ENCODE measurements at regions of chr16 and their contacts with region 1.

Region 1: GRCh38 chr16:29029168-29029994 is 44.5 kb downstream of the LAT start:
- DNase-seq: peak; percentile 96
- ATAC-seq: peak; percentile 96
- H3K4me3 Mint-ChIP-seq: peak overlapping the region; percentile 0
- H3K27ac Mint-ChIP-seq: peak overlapping the region; percentile 84
- H3K4me1 Mint-ChIP-seq: peaks cover 46% of the 10 kb centered on the region
- H3K27me3 Mint-ChIP-seq: no peaks in the 10 kb centered on the region

Region 2: DNA sequence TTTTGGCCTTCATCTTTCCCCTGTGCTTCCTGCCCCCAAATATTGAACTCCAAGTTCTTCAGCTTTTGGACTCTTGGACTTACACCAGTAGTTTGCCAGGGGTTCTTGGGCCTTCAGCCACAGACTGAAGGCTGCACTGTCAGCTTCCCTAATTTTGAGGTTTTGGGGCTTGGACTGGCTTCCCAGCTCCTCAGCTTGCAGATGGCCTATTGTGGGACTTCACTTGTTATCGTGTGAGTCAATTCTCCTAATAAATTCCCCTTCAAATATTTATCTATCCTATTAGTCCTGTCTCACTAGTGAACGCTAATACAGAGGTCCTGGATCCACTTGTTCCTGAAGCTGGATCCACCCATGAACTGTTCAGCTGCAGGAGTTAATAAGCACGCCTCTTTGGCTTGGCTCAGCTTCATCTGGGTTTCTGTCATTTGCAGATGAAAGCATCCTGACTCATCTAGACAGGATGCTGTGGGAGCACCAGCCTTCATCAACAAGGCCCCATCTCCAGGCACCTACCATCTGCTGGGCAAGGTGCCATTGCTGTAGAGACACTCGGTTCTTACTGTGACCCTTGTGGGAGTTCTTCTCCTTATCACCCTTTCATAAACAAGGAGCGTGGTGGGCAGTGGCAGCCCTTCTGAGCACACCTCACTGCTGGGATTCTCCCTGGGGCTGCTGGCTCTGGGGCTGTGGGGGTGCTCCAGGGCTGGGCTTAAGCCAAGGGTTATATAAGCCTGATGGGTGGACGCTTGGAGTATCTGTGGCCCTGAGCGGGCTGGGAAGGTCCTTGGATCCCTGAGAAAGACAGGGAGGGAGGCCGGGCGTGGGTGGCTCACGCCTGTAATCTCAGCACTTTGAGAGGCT is 21.4 kb before region 1 on chr16:
- CTCF ChIA-PET with region 1: interaction called, 3 read pairs
- POLR2A ChIA-PET with region 1: interaction called, 3 read pairs
- intact Hi-C with region 1: loop called (anchors 2 kb)
- DNase-seq: peak; percentile 89
- ATAC-seq: peak; percentile 91
- H3K4me3 Mint-ChIP-seq: peak overlapping the region; percentile 33
- H3K27ac Mint-ChIP-seq: peak overlapping the region; percentile 91
- H3K4me1 Mint-ChIP-seq: peaks cover 63% of the 10 kb centered on the region
- H3K27me3 Mint-ChIP-seq: no peaks in the 10 kb centered on the region